HEK293T (cell line): ENCODE measurements at regions of chr1 and their contacts with region 1.

Region 1: GRCh38 chr1:156160743-156161171 is 7.4 kb downstream of the SEMA4A start:
- DNase-seq: peak; percentile 93

Region 2: DNA sequence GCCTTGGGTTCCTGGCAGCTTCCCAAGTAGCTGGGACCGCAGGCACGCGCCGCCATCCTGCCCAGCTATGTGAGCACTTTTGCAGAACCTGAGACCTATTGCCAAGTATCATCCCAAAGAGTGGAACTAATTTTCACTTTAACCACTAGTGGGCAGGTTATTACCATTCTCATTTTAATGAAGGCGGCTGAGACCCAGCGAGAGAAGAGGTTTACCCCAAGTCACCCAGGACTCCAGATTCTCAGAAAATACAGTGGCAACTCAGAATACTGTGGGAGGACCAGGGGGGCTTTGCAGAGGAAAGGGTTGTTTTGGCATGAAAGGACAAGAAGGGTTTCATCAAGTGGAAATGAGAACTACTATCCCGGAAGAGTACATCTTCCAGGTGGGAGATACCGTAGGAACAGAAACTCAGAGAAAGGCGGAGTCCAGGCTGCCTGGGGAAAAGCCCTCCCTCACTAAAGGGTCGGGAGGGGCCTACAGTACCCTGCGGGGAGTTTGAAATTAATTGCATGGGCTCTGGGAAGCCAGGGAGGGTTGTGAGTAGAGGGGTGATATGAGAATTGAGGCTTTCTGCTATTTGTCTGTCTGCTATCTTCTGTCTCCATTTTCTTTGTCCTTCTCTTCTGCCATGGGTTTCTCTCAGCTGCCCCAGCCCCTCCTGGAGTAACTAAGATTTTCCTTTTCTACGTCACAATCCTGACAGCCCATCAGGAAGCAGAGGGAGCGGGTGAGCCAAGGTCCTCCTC is 14.6 kb before region 1 on chr1:
- CTCF ChIA-PET with region 1: no interaction called
- POLR2A ChIA-PET with region 1: interaction called, 20 read pairs
- DNase-seq: peak; percentile 81